Activated CD4-positive, alpha-beta memory T cell treated with anti-CD3 and anti-CD28 coated beads for 36 hours (primary cell): ENCODE measurements at regions of chr11 and their contacts with region 1.

Region 1: DNA sequence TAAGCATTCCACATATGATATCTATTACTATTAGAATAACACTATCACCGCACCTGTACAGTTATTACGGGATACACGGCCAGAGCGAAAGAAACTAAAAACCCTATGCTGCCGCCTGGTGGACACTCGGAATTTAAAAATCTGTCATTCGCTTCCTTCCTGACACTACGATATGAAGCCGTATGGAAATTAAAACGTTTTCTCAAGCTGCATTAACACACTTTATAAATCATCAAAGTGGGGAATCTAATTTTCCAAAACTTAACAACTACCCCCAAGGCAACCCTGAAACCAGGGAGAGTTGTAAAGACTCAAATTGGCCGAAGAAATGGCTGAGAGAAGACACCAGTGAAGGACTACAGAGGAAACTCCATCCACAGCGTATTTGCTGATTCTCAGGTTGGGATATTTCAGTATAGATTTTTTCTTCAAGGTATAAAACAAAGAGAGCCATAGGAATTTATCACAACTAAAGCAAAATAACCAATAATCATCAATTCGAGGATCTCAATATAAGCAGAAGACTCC is 1.4 kb downstream of the CCDC73 start:
- DNase-seq: peak; percentile 75
- H3K4me3 Mint-ChIP-seq: no peak overlapping the region
- H3K27ac Mint-ChIP-seq: no peak overlapping the region
- H3K4me1 Mint-ChIP-seq: peaks cover 7% of the 10 kb centered on the region
- H3K27me3 Mint-ChIP-seq: peaks cover 2% of the 10 kb centered on the region

Region 2: GRCh38 chr11:32323814-32324130 is 469.2 kb before region 1 on chr11:
- CTCF ChIA-PET with region 1: interaction called, 32 read pairs
- POLR2A ChIA-PET with region 1: no interaction called
- intact Hi-C with region 1: loop called (anchors 1 kb)
- DNase-seq: no peak
- H3K4me3 Mint-ChIP-seq: no peak overlapping the region
- H3K27ac Mint-ChIP-seq: no peak overlapping the region
- H3K4me1 Mint-ChIP-seq: no peaks in the 10 kb centered on the region
- H3K27me3 Mint-ChIP-seq: peaks cover 18% of the 10 kb centered on the region

Region 3: GRCh38 chr11:32374261-32374711 is 418.7 kb before region 1 on chr11:
- CTCF ChIA-PET with region 1: interaction called, 5 read pairs
- POLR2A ChIA-PET with region 1: no interaction called
- intact Hi-C with region 1: loop called (anchors 2 kb)
- DNase-seq: peak; percentile 60
- H3K4me3 Mint-ChIP-seq: no peak overlapping the region
- H3K27ac Mint-ChIP-seq: no peak overlapping the region
- H3K4me1 Mint-ChIP-seq: no peaks in the 10 kb centered on the region
- H3K27me3 Mint-ChIP-seq: peaks cover 4% of the 10 kb centered on the region

Region 4: GRCh38 chr11:32435511-32435941 is 357.5 kb before region 1 on chr11 and contains the start of gene WT1:
- CTCF ChIA-PET with region 1: interaction called, 4 read pairs
- POLR2A ChIA-PET with region 1: no interaction called
- intact Hi-C with region 1: loop called (anchors 10 kb)
- DNase-seq: no peak
- H3K4me3 Mint-ChIP-seq: peak within 1 kb of the TSS; percentile 53
- H3K27ac Mint-ChIP-seq: no peak within 1 kb of the TSS
- H3K4me1 Mint-ChIP-seq: peaks cover 46% of the 10 kb centered on the region
- H3K27me3 Mint-ChIP-seq: peaks cover 77% of the 10 kb centered on the region
- total RNA-seq, gene WT1: not detected

Region 5: GRCh38 chr11:32713496-32713895 is 79.5 kb before region 1 on chr11:
- CTCF ChIA-PET with region 1: interaction called, 4 read pairs
- POLR2A ChIA-PET with region 1: no interaction called
- intact Hi-C with region 1: loop called (anchors 1 kb)
- DNase-seq: no peak
- H3K4me3 Mint-ChIP-seq: no peak overlapping the region
- H3K27ac Mint-ChIP-seq: no peak overlapping the region
- H3K4me1 Mint-ChIP-seq: no peaks in the 10 kb centered on the region
- H3K27me3 Mint-ChIP-seq: peaks cover 15% of the 10 kb centered on the region

Region 6: DNA sequence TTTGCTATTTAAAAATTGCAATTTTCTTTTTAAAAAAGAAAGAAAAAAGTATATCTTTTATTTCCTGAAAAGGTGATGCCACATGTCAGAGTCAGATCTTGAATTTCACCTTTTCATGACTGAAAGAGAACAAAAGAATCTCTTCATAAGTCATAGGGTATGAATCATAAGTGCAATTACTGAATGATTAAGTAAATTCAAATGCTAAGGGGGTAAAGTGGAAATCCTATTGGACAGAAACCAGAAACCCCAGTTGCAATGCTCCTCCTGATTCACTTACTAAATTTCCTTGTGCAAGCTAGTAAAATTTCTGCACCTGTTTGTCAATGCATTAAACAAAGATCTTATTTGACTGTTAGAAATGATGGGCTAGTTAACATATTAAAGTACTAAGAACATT is 28.5 kb after region 1 on chr11:
- CTCF ChIA-PET with region 1: no interaction called
- POLR2A ChIA-PET with region 1: no interaction called
- intact Hi-C with region 1: no loop called
- DNase-seq: no peak
- H3K4me3 Mint-ChIP-seq: no peak overlapping the region
- H3K27ac Mint-ChIP-seq: no peak overlapping the region
- H3K4me1 Mint-ChIP-seq: peaks cover 20% of the 10 kb centered on the region
- H3K27me3 Mint-ChIP-seq: peaks cover 7% of the 10 kb centered on the region